ENCODE measurements at regions of chr2 and their contacts with region 1.

Region 1: DNA sequence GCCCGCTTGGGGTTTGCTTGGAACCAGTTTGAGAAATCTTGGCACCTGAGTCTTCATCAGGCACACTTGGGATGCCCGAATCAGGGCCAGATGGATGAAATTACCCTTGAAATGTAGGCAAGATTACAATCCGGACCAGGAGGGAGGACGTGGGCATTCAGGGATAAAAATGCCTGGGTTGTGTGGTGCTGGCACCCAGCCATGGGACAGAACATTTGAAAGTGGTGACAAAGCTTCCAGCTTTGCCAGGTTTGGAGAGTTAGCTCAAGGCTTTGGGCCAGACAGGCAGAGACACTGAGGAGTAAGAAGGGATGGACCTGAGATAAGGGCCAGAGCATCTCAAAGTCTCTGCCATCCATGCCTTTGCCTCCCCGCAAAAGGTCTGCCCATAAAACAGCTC is 182.2 kb downstream of the TTC32 start:
- DNase-seq: no peak
- ATAC-seq: no peak

Region 2: DNA sequence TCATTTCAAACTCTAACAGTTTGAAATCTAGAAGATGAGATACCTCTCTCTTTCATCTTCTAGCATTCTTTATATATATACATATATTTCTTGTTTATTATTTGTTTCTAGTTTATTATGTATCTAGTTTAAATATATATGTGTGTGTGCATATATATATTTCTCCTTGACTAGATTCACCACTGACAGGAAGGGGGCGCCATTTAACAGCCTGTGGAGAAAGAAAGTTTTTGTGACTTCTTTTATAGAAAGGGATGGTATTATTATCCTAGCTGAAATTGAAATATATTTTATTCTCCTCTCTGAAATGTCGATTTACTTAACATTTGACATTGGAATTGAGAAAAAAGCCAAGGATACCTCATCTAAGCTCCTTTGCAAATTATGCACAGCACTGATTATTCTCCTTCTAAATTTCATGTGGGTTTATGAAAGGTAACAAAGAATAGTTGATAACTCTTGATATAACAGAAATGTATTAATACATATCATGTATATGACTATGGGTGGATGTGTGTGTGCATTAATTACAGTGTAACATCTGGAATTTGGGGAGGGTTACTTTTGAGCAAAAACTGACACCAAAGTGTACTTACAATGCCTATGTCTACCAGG is 969.5 kb before region 1 on chr2:
- intact Hi-C with region 1: no loop called
- DNase-seq: peak; percentile 70
- ATAC-seq: no peak

Region 3: DNA sequence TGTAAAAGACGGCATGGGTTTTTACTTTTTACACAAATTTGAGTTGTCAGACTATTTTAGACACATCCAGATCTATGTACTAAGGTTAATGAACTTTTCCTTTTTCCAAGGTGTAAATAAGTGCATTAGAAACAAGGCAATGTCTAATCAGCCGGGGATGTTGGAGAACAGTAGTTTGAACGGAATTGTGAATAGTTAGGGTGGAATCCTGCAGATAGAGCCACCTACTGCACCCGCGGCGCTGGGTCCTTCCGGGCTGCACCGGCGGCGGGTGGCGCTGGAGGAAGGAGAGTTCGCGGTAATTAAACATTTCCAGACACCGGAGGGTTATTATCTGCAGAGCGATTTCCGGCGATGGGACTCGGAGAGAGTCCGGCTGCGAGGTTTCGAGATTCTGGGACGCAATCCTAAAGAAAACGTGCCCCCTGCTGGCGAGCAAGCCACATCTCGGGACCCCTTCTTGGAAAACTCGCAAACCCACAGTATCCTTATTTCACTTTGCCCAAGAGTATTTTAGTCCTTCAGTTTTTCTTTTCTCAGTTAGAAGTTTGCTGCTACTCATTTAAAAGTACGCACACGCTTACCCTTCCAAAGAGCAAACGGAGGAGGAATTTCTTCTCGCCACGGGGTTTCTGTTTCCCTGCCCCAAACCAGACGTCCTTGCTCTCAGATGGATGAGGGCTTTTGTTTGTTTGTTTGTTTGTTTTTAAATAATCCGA is 356.6 kb before region 1 on chr2:
- intact Hi-C with region 1: no loop called
- DNase-seq: peak; percentile 91
- ATAC-seq: peak; percentile 78

Region 4: DNA sequence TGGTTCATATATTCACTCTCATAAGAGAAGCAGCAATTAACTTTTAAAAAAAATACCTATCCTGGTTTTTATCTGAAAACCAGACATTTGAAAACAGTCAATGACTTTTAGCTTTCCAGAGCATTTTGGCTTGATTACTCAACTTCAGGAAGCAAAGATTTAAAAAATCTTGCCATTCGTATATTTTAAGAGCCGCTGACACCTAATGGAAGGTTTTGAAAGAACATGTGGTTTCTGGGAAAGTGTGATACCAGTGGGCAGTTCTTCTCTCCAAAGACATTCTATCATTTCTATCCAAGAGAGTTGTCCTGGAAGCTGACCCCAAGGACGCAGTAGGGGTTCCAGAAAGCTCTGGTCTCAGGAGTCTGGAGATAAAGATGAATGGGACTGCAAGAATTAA is 52.5 kb before region 1 on chr2:
- intact Hi-C with region 1: no loop called
- DNase-seq: no peak
- ATAC-seq: no peak

Region 5: DNA sequence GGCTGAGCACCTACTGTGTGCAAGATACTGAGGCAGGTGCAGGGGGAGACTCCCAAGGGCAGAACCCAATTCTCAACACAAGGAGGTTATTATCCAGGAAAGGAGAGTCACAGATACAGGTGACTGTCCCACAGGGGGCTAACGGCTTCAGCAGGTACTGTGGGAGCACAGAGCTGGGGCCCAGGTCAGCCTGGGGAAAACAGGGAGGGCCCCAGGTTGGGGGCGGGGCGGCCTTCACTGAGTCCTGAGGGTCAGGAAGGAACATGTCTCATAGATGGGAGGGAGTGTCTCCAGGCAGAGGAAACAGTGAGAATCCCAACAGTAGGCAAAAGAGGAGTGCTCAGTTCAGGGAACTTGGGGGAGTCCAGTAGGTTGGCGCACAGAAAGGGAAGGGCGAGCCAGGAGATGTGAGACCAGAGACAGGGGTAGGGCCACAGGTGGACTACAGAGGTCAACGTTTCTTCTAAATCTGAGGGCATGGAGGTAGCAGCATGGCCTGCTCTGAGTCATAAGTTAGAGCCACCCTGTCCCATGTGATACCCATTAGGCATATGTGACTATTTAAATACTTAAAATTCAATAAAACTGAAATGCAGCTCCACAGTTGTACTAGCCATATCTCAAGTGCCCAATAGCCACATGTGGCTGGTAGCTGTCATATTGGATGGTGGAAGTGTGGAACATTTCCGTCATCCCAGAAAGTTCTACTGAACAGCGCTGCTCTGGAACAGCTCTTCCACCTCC is 25.1 kb after region 1 on chr2:
- intact Hi-C with region 1: loop called (anchors 2 kb)
- DNase-seq: no peak
- ATAC-seq: no peak